CD14-positive monocyte (primary cell): ENCODE measurements at regions of chr10 and their contacts with region 1.

Region 1: GRCh38 chr10:77027576-77027975 is 610.0 kb downstream of the KCNMA1 start:
- DNase-seq: peak; percentile 1 to 15 (median 12)
- H3K4me3 ChIP-seq: no peak overlapping the region
- H3K4me3 Mint-ChIP-seq: peak overlapping the region in 1 of 2 donors; percentile 23
- H3K27ac ChIP-seq: no peak overlapping the region
- H3K27ac Mint-ChIP-seq: no peak overlapping the region
- H3K4me1 ChIP-seq: peaks cover 19 to 27% of the 10 kb centered on the region in 2 donors
- H3K4me1 Mint-ChIP-seq: peaks cover 40% of the 10 kb centered on the region
- H3K27me3 ChIP-seq: no peaks in the 10 kb centered on the region
- H3K27me3 Mint-ChIP-seq: peaks cover 0 to 2% (median 0%) of the 10 kb centered on the region in 3 donors
- CTCF ChIP-seq: no peak

Region 2: DNA sequence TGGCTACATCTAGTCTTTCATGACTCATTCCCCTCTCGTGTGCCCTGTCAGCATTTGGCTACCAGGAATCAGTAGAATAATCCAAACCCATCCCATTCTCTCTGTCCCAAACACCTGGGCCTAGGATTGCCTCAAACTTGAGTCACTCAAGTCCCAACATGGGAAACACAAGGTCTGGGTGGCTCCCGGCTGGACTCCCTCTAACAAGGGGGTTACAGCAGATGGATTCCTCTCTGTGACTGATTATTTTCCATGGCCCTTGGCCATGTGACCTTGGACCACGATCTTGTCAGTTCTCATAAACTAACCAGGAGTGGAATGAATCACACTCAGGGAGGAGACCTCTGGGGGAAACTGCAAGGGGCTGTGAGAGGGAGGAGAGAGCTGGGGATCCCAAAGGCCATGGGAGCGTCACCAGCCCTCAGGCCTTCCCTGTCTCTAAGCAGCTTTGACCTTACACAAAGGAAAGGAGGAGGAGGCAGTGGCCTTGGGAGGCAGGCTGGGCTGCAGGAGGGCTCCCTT is 76.9 kb after region 1 on chr10:
- intact Hi-C with region 1: no loop called
- DNase-seq: no peak
- H3K4me3 ChIP-seq: no peak overlapping the region
- H3K4me3 Mint-ChIP-seq: no peak overlapping the region
- H3K27ac ChIP-seq: no peak overlapping the region
- H3K27ac Mint-ChIP-seq: no peak overlapping the region
- H3K4me1 ChIP-seq: no peaks in the 10 kb centered on the region
- H3K4me1 Mint-ChIP-seq: no peaks in the 10 kb centered on the region
- H3K27me3 ChIP-seq: no peaks in the 10 kb centered on the region
- H3K27me3 Mint-ChIP-seq: peaks cover 2 to 12% (median 8%) of the 10 kb centered on the region in 3 donors
- CTCF ChIP-seq: no peak

Region 3: DNA sequence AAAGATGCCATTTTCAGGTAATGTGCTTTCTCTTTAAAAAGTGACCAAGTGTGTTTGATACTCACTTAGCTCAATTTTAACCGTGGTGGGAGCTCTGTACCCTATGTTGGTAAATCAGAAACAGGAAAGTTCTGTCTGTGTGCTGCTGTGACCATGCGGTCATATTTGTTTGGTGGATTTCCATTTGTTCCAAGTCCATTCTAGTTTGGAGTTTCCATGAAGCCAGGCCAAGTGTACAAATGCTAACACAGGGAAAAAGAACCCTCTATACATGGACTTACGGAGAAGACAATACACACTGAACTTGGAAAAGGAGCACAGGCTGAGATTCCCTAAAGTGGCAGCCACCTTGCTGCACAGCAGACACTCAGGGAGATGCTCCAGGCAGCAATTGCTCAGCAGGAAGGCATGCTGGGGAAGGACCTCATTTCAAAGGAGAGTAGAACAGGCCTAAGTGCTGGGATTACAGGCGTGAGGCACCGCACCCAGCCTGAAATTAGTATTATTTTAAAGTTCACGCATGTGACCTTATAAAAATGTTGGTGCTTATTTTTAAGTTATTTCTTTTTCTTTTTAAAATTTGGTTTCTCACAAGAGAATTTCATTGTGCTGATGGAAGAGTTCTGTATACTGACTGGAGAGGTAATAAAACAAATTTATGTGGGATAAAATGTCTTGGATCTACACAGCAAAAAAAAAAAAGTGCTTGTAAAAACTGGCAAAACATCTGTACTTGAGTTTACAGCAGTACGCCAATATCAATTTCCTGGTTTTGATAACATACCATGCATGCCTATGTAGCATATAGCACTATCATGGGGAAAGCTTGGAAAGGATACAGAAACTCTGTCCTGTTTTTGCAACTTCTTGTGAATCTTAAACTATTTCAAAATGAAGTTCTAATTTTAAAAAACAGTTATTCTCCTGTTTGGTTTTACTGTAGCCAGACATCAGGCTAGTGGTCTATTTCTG is 173.8 kb after region 1 on chr10:
- intact Hi-C with region 1: loop called in 1 of 2 experiments (anchors 5 kb)
- DNase-seq: no peak
- H3K4me3 ChIP-seq: no peak overlapping the region
- H3K4me3 Mint-ChIP-seq: no peak overlapping the region
- H3K27ac ChIP-seq: no peak overlapping the region
- H3K27ac Mint-ChIP-seq: no peak overlapping the region
- H3K4me1 ChIP-seq: no peaks in the 10 kb centered on the region
- H3K4me1 Mint-ChIP-seq: no peaks in the 10 kb centered on the region
- H3K27me3 ChIP-seq: peaks cover 0 to 2% of the 10 kb centered on the region in 2 donors
- H3K27me3 Mint-ChIP-seq: peaks cover 3 to 12% (median 11%) of the 10 kb centered on the region in 3 donors
- CTCF ChIP-seq: no peak